ENCODE measurements at regions of chr10 and their contacts with region 1.

Region 1: DNA sequence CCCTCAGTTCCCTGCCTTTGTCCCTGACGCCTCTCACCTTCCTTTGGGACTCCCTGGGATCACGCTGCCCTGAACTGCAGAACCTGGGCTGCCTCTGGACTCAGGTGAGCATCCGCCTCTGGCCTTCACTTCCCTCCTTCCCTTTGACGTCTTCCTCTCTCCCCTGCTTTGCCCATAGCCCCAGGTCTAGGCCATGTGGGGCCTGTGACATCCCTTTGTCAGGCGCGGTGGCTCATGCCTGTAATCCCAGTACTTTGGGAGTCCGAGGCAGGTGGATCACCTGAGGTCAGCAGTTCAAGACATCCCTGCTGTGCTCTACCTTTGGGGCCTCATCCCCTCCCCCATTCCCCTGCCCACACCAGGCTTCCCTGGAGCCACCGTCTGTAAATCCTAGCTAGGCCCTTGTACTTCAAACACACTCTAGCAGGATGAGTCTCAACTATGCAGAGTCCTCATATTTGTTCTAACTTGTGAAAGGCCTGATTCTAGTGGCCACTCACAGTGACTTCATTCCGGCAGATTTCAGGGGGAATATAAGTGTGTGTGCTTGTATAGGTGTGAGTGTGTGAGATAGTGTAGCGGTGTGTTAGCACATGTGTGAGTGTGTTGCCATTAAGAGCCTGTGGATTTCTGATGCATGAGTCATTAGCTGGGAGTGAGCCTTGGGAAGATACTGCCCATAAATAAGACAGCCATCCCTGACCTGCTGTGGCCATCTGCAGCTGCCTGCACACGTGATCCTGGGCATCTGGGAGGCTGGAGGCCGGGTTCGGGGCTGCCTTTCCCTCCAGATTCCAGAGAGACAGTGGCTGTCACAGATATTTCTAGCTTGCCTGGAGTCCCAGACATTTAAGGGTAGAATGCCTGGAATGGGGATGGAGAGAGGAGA is 1.8 kb upstream of the NEURL1 start:
- DNase-seq: no peak
- H3K4me3 Mint-ChIP-seq: no peak overlapping the region
- H3K27ac Mint-ChIP-seq: no peak overlapping the region
- H3K4me1 Mint-ChIP-seq: peaks cover 20% of the 10 kb centered on the region
- H3K27me3 Mint-ChIP-seq: peaks cover 34% of the 10 kb centered on the region

Region 2: DNA sequence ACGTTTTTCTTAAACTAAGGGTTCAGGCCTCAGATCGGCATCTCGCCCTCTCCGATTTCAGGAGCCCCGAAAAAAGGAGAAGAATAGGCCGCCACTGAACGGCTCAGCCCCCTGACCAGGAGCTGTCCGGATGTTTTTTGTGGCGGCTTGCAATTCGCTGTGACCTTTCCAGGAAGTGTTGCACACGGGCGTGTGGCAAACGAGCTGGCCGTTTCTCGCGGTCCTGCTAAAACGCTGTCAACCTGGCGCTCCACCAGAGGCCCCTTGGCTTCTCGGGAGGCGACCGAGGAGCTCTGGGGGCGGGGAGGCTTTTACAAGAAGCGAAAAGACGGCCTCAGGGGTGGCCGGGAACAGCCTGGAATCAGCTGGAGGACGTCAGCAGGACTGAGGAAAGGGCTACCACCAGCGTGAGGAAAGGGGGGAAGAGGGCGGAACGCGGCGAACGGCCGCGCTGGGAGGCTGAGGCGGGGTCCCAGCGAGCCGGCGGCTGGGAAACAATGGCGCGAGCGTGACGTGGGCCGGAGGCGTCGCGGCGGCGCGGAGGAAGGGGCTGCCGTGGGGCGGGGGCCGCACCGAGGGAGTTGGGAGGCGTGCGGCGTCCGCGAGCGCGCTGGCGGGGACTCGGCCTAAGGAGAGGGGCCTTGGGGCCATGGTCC is 299.2 kb before region 1 on chr10:
- CTCF ChIA-PET with region 1: no interaction called
- POLR2A ChIA-PET with region 1: no interaction called
- intact Hi-C with region 1: loop called (anchors 5 kb)
- DNase-seq: peak; percentile 81
- H3K4me3 Mint-ChIP-seq: peak overlapping the region; percentile 92
- H3K27ac Mint-ChIP-seq: peak overlapping the region; percentile 92
- H3K4me1 Mint-ChIP-seq: peaks cover 43% of the 10 kb centered on the region
- H3K27me3 Mint-ChIP-seq: no peaks in the 10 kb centered on the region

Region 3: GRCh38 chr10:103416436-103417147 is 75.1 kb before region 1 on chr10:
- CTCF ChIA-PET with region 1: interaction called, 42 read pairs
- POLR2A ChIA-PET with region 1: no interaction called
- intact Hi-C with region 1: no loop called
- DNase-seq: peak; percentile 61
- H3K4me3 Mint-ChIP-seq: no peak overlapping the region
- H3K27ac Mint-ChIP-seq: no peak overlapping the region
- H3K4me1 Mint-ChIP-seq: no peaks in the 10 kb centered on the region
- H3K27me3 Mint-ChIP-seq: no peaks in the 10 kb centered on the region

Region 4: DNA sequence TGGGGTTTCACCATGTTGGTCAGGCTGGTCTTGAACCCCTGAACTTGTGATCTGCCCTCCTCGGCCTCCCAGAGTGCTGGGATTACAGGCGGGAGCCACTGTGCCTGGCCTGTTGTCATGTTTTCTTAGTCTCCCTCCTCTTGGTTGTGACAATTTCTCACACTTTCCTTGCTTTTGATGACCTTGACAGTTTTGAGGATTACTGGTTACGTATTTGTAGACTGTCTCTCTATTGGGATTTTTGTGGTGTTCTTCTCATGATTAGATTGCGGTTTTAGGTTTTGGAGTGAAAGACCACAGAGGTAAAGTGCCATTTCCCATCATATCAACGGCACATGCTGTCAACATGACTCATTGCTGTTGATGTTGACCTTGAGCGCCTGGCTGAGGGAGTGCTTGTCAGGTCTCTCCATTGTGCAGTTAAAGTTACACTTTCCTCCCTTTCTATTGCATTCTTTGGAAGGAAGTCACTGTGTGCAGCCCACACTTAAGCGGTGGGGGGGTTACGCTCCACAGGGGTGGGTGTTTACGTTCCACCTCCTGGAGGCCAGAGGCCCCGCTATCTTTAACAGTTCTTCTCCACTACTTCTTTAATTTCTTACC is 12.5 kb after region 1 on chr10:
- CTCF ChIA-PET with region 1: interaction called, 8 read pairs
- POLR2A ChIA-PET with region 1: interaction called, 3 read pairs
- intact Hi-C with region 1: loop called (anchors 1 kb)
- DNase-seq: peak; percentile 69
- H3K4me3 Mint-ChIP-seq: peak overlapping the region; percentile 17
- H3K27ac Mint-ChIP-seq: peak overlapping the region; percentile 31
- H3K4me1 Mint-ChIP-seq: peaks cover 30% of the 10 kb centered on the region
- H3K27me3 Mint-ChIP-seq: peaks cover 41% of the 10 kb centered on the region

Measured in activated CD4-positive, alpha-beta memory T cell treated with anti-CD3 and anti-CD28 coated beads for 36 hours (primary cell).